ENCODE measurements at regions of chr18 and their contacts with region 1.

Region 1: GRCh38 chr18:8704361-8705279 is 736 bp upstream of the MTCL1 start:
- DNase-seq: peak; percentile 81 to 96 (median 90)
- ATAC-seq: peak; percentile 93
- H3K4me3 ChIP-seq: peak overlapping the region; percentile 56 to 73
- H3K27ac ChIP-seq: peak overlapping the region; percentile 57 to 75
- H3K4me1 ChIP-seq: peaks cover 16 to 24% of the 10 kb centered on the region in 2 donors
- H3K27me3 ChIP-seq: peaks cover 11 to 73% of the 10 kb centered on the region in 2 donors
- CTCF ChIP-seq: no peak

Region 2: GRCh38 chr18:8765783-8766463 is 61.3 kb after region 1 on chr18:
- intact Hi-C with region 1: no loop called
- DNase-seq: peak in 1 of 4 donors; percentile 27
- ATAC-seq: no peak
- H3K4me3 ChIP-seq: no peak overlapping the region
- H3K27ac ChIP-seq: no peak overlapping the region
- H3K4me1 ChIP-seq: no peaks in the 10 kb centered on the region
- H3K27me3 ChIP-seq: no peaks in the 10 kb centered on the region
- CTCF ChIP-seq: no peak

Region 3: GRCh38 chr18:8982416-8983184 is 278.0 kb after region 1 on chr18:
- intact Hi-C with region 1: loop called in 1 of 2 experiments (anchors 5 kb)
- DNase-seq: peak in 1 of 4 donors; percentile 36
- ATAC-seq: peak; percentile 92
- H3K4me3 ChIP-seq: no peak overlapping the region
- H3K27ac ChIP-seq: no peak overlapping the region
- H3K4me1 ChIP-seq: no peaks in the 10 kb centered on the region
- H3K27me3 ChIP-seq: no peaks in the 10 kb centered on the region
- CTCF ChIP-seq: peak in 1 of 2 donors; percentile 21